ENCODE measurements at regions of chr5 and their contacts with region 1.

Region 1: GRCh38 chr5:139403787-139404483 is at the start of gene SPATA24:
- DNase-seq: peak; percentile 99
- ATAC-seq: peak; percentile 93
- H3K4me3 Mint-ChIP-seq: peak within 1 kb of the TSS; percentile 94
- H3K27ac Mint-ChIP-seq: peak within 1 kb of the TSS; percentile 100
- H3K4me1 Mint-ChIP-seq: peaks cover 40% of the 10 kb centered on the region
- H3K27me3 Mint-ChIP-seq: no peaks in the 10 kb centered on the region
- total RNA-seq, gene SPATA24: 3.8 to 4.0 TPM

Region 2: GRCh38 chr5:139392678-139393496 is 11.0 kb before region 1 on chr5:
- CTCF ChIA-PET with region 1: interaction called, 17 read pairs
- POLR2A ChIA-PET with region 1: interaction called, 39 read pairs
- DNase-seq: peak; percentile 93
- ATAC-seq: peak; percentile 73
- H3K4me3 Mint-ChIP-seq: peak overlapping the region; percentile 98
- H3K27ac Mint-ChIP-seq: peak overlapping the region; percentile 97
- H3K4me1 Mint-ChIP-seq: peaks cover 68% of the 10 kb centered on the region
- H3K27me3 Mint-ChIP-seq: no peaks in the 10 kb centered on the region